Motor neuron (in vitro differentiated cells): ENCODE measurements at regions of chr4 and their contacts with region 1.

Region 1: GRCh38 chr4:170259631-170260153 is 169.9 kb upstream of the AADAT start:
- ATAC-seq: peak; percentile 97 to 100 (median 100)
- H3K4me3 ChIP-seq: no peak overlapping the region
- H3K27ac ChIP-seq: no peak overlapping the region
- H3K4me1 ChIP-seq: peaks cover 0 to 5% of the 10 kb centered on the region in 2 donors

Region 2: DNA sequence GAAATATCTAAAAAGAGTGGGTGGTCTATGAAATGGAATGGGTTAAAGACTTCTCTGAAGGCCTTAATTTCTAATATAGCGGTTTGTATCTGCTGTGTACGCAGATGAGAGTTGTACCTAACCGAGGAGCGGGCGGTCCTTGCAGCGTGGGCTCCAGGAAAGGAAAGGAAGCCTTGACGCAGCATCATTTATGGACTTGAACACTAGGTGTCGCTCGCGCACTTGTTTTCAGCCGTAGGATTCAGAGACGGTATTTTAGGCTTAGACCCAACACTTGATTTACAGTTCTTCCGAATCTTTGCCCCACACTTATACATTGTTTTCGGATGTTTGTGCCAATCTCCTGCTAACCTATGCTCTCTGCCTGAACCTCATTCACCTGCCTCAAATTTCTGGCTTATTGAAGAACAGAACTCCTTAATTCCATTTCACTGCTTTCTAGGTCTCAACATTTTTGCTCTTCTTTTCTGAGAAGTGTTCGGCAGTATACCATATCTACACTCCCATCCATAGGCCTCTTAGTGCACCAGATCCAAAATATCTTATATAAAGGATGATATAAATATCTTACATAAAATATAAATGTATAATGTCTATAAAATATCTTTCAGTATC is 121.0 kb before region 1 on chr4:
- in situ Hi-C with region 1: loop called in 1 of 9 experiments (anchors 10 kb)
- ATAC-seq: peak; percentile 61 to 97 (median 78)
- H3K4me3 ChIP-seq: no peak overlapping the region
- H3K27ac ChIP-seq: no peak overlapping the region
- H3K4me1 ChIP-seq: no peaks in the 10 kb centered on the region

Region 3: DNA sequence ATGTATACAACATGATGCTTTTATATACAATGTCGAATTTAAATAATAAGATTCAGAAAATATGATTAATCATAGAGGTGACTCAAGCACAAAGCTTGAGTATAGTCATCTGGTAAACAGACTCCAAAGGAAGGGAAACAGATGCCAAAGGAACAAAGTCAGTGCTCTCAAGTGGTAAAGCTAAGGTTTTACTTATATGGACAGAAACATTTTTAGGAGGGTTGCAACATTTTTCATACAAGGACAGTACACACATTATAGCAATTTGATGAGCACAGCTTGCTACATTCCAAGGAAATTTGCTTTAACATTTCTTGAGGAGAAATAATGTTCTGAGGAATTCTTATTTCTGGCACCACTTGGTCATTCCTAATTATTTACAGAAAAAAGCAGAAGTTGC is 163.4 kb after region 1 on chr4:
- in situ Hi-C with region 1: no loop called
- ATAC-seq: no peak
- H3K4me3 ChIP-seq: no peak overlapping the region
- H3K27ac ChIP-seq: no peak overlapping the region
- H3K4me1 ChIP-seq: peaks cover 15 to 42% of the 10 kb centered on the region in 2 donors

Region 4: GRCh38 chr4:170589597-170590191 is 330.0 kb after region 1 on chr4:
- in situ Hi-C with region 1: no loop called
- ATAC-seq: peak in 7 of 8 experiments; percentile 29 to 82 (median 67)
- H3K4me3 ChIP-seq: no peak overlapping the region
- H3K27ac ChIP-seq: no peak overlapping the region
- H3K4me1 ChIP-seq: no peaks in the 10 kb centered on the region